H1 (cell line): ENCODE measurements at regions of chr2 and their contacts with region 1.

Region 1: DNA sequence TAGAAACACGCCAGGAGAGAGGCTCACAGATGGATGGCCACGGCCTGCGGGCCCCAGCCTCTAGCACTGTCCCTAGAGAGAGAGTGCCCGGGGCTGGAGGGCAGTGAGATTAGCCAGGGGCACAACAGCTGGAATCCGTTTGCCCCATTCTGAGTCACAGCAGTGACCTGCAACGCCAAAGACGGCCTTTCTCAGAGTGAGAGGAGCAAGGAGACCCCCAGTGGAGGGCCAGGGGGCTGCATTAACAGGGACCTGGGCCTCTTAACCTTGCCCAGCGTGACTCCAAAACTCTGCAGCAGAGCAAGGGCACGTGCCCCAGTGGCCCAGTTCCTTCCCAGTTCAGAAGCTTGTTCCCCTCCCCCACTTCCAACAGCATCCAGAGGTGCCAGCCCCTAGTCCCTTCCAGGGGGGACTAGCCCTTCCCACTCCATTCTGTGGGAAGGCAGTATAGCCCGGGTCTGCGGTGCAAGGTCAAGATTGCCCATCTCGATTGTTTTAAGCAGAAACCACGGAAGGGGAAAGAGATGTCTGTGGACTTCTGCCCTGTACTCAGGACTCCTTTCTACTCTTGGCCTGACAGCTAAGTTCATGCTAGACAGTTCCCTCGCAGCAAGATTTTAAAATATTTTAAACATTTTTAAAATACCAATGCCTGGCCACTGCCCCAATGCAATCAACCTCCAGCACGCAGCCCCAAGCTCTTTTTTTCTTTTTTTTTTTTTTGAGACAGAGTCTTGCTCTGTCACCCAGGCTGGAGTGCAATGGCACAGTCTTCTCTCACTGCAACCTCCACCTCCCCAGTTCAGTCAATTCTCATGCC is 50.9 kb upstream of the BIN1 start:
- DNase-seq: peak; percentile 57 to 81
- H3K4me3 ChIP-seq: no peak overlapping the region
- H3K27ac ChIP-seq: no peak overlapping the region
- H3K4me1 ChIP-seq: peaks cover 0 to 8% (median 5%) of the 10 kb centered on the region in 4 experiments; a peak in 4 of 7 replicates
- H3K27me3 ChIP-seq: no peaks in the 10 kb centered on the region
- CTCF ChIP-seq: peak; percentile 76 to 86 (median 78)
- EP300 ChIP-seq: no peak
- POLR2A ChIP-seq: no peak
- RAD21 ChIP-seq: peak; percentile 73 to 84

Region 2: GRCh38 chr2:127049927-127050802 is 107.7 kb before region 1 on chr2:
- CTCF ChIA-PET with region 1: interaction called, 10 read pairs
- POLR2A ChIA-PET with region 1: no interaction called
- DNase-seq: peak; percentile 41 to 95
- H3K4me3 ChIP-seq: no peak overlapping the region
- H3K27ac ChIP-seq: no peak overlapping the region
- H3K4me1 ChIP-seq: peaks cover 0 to 6% (median 0%) of the 10 kb centered on the region in 4 experiments; a peak in 2 of 7 replicates
- H3K27me3 ChIP-seq: no peaks in the 10 kb centered on the region
- CTCF ChIP-seq: peak in 2 of 3 experiments; percentile 85 to 96; a peak in 3 of 4 replicates
- EP300 ChIP-seq: no peak; a peak in 1 of 3 replicates
- POLR2A ChIP-seq: no peak
- RAD21 ChIP-seq: peak; percentile 82 to 87

Region 3: GRCh38 chr2:127072970-127073369 is 84.9 kb before region 1 on chr2:
- CTCF ChIA-PET with region 1: interaction called, 39 read pairs
- POLR2A ChIA-PET with region 1: no interaction called
- DNase-seq: no peak
- H3K4me3 ChIP-seq: no peak overlapping the region
- H3K27ac ChIP-seq: no peak overlapping the region
- H3K4me1 ChIP-seq: no peaks in the 10 kb centered on the region; a peak in 2 of 7 replicates
- H3K27me3 ChIP-seq: no peaks in the 10 kb centered on the region
- CTCF ChIP-seq: no peak
- EP300 ChIP-seq: no peak
- POLR2A ChIP-seq: no peak
- RAD21 ChIP-seq: no peak

Region 4: DNA sequence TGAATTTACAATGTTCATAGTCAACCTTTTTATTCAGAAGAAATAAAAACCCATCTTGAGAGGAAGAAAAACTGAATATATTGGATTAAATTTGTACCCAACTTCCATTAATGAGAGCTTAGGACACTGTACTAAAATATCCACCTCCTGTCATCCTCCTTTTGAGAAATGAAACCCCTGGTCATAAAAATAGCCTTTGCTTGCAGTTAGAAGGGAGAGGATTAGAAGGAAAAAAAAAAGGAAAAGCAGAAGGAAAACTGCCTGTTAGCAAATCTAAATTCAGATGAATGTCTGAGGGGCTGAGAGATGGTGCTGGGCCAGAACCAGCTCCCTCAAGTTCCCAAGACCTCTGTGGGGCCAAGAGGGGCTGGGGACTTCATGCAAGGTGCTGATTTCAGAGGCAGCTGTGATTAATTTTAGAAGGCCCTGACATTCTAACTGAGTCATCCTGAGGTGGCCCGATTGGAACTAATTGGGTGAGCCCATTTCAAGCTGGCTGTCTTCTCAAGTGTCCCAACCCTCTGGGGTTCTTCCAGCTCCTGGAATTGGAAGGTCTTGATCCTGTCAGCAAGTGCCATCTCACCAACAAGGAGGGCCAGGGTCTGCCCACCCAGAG is 12.5 kb before region 1 on chr2:
- CTCF ChIA-PET with region 1: interaction called, 16 read pairs
- POLR2A ChIA-PET with region 1: interaction called, 3 read pairs
- DNase-seq: peak in 1 of 2 experiments; percentile 27
- H3K4me3 ChIP-seq: no peak overlapping the region
- H3K27ac ChIP-seq: no peak overlapping the region
- H3K4me1 ChIP-seq: 0 out of 7 replicates have a peak, but pooled peaks cover 0 to 1% (median 0%) of the 10 kb centered on the region in 4 experiments
- H3K27me3 ChIP-seq: 0 out of 7 replicates have a peak, but pooled peaks cover 0 to 2% (median 0%) of the 10 kb centered on the region in 4 experiments
- CTCF ChIP-seq: no peak
- EP300 ChIP-seq: no peak
- POLR2A ChIP-seq: no peak
- RAD21 ChIP-seq: no peak

Region 5: DNA sequence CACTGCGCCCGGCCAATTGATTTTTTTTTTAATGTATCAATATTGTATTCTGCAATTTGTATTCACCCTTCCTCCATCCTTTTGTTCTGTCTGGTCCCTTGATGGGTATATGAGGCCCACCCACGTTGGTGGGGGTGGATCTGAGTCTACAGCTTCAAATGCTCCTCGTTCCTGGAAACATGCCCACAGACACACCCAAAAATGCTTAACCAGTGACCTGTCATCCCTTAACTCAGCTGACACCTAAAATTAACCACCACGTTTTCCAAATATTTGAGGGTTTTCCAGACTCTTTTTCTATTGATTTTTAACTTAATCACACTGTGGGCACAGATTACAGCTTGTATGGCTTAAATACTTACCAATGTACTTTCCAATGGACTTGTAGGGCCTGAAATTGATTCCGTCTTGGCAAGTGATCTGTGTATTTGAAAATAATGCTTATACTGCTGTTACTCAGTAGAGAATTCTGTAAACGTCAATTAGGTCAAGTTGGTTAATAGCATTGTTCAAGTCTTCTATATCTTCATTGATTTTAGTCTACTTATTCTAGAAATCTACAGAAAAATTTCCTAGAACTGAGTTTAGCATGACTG is 96.6 kb after region 1 on chr2:
- CTCF ChIA-PET with region 1: no interaction called
- POLR2A ChIA-PET with region 1: no interaction called
- DNase-seq: no peak
- H3K4me3 ChIP-seq: no peak overlapping the region
- H3K27ac ChIP-seq: no peak overlapping the region
- H3K4me1 ChIP-seq: no peaks in the 10 kb centered on the region
- H3K27me3 ChIP-seq: no peaks in the 10 kb centered on the region
- CTCF ChIP-seq: no peak
- EP300 ChIP-seq: no peak
- POLR2A ChIP-seq: no peak
- RAD21 ChIP-seq: no peak